Mammary epithelial cell (primary cell): ENCODE measurements at regions of chr3 and their contacts with region 1.

Region 1: GRCh38 chr3:132180337-132180791 is 136.8 kb upstream of the ACP3 start:
- DNase-seq: peak; percentile 63
- H3K4me3 ChIP-seq: no peak overlapping the region
- H3K27ac ChIP-seq: no peak overlapping the region
- H3K4me1 ChIP-seq: no peaks in the 10 kb centered on the region
- H3K27me3 ChIP-seq: no peaks in the 10 kb centered on the region
- CTCF ChIP-seq: peak; percentile 43 to 72

Region 2: GRCh38 chr3:131026321-131027178 is 1153.8 kb before region 1 on chr3 and contains the starts of genes ASTE1 and NEK11:
- CTCF ChIA-PET with region 1: no interaction called
- dilution Hi-C with region 1: no loop called
- in situ Hi-C with region 1: loop called in 1 of 2 experiments (anchors 25 kb)
- intact Hi-C with region 1: no loop called
- DNase-seq: peak; percentile 87
- H3K4me3 ChIP-seq: peak within 1 kb of the TSS; percentile 68 to 81 (median 78)
- H3K27ac ChIP-seq: peak within 1 kb of the TSS; percentile 97
- H3K4me1 ChIP-seq: peaks cover 4% of the 10 kb centered on the region
- H3K27me3 ChIP-seq: no peaks in the 10 kb centered on the region
- CTCF ChIP-seq: peak in 1 of 2 donors; percentile 4
- total RNA-seq, gene ASTE1: 4.4 to 6.3 TPM
- total RNA-seq, gene NEK11: 7.7 to 20.2 TPM

Region 3: GRCh38 chr3:131794766-131795388 is 385.5 kb before region 1 on chr3:
- CTCF ChIA-PET with region 1: no interaction called
- dilution Hi-C with region 1: no loop called
- in situ Hi-C with region 1: loop called (anchors 25 kb)
- intact Hi-C with region 1: loop called (anchors 1 kb)
- DNase-seq: peak; percentile 29
- H3K4me3 ChIP-seq: no peak overlapping the region
- H3K27ac ChIP-seq: no peak overlapping the region
- H3K4me1 ChIP-seq: no peaks in the 10 kb centered on the region
- H3K27me3 ChIP-seq: no peaks in the 10 kb centered on the region
- CTCF ChIP-seq: peak; percentile 89 to 95

Region 4: GRCh38 chr3:131849615-131850014 is 330.7 kb before region 1 on chr3:
- CTCF ChIA-PET with region 1: no interaction called
- dilution Hi-C with region 1: no loop called
- in situ Hi-C with region 1: no loop called
- intact Hi-C with region 1: no loop called
- DNase-seq: no peak
- H3K4me3 ChIP-seq: no peak overlapping the region
- H3K27ac ChIP-seq: no peak overlapping the region
- H3K4me1 ChIP-seq: no peaks in the 10 kb centered on the region
- H3K27me3 ChIP-seq: no peaks in the 10 kb centered on the region
- CTCF ChIP-seq: no peak

Region 5: DNA sequence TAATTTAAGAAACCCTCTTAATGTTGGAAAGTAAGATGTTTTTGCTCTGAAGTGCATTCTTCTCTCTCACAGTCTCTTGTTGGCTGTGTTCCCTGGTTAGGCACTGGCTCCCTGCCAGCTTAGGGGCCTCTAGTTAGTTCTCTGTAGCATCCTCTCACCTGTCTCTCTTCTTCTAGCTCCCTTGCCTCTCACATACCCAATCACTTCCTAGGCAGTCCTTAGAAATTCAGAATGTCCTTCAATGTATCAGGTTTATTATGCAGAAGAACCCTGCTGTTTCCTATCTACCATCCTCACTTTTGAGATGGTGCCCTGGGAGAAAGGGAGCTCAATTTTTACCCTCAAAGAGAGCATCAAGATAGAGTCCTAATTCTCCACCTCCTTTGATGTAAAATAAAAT is 109.3 kb before region 1 on chr3:
- CTCF ChIA-PET with region 1: no interaction called
- dilution Hi-C with region 1: loop called (anchors 25 kb)
- in situ Hi-C with region 1: no loop called
- intact Hi-C with region 1: no loop called
- DNase-seq: no peak
- H3K4me3 ChIP-seq: no peak overlapping the region
- H3K27ac ChIP-seq: no peak overlapping the region
- H3K4me1 ChIP-seq: no peaks in the 10 kb centered on the region
- H3K27me3 ChIP-seq: no peaks in the 10 kb centered on the region
- CTCF ChIP-seq: no peak

Region 6: GRCh38 chr3:132135628-132136333 is 44.6 kb before region 1 on chr3:
- CTCF ChIA-PET with region 1: interaction called, 3 read pairs
- dilution Hi-C with region 1: no loop called
- in situ Hi-C with region 1: no loop called
- intact Hi-C with region 1: loop called (anchors 5 kb)
- DNase-seq: peak; percentile 98
- H3K4me3 ChIP-seq: peak overlapping the region; percentile 26 to 42 (median 31)
- H3K27ac ChIP-seq: peak overlapping the region; percentile 100
- H3K4me1 ChIP-seq: peaks cover 29% of the 10 kb centered on the region
- H3K27me3 ChIP-seq: no peaks in the 10 kb centered on the region
- CTCF ChIP-seq: no peak

Region 7: DNA sequence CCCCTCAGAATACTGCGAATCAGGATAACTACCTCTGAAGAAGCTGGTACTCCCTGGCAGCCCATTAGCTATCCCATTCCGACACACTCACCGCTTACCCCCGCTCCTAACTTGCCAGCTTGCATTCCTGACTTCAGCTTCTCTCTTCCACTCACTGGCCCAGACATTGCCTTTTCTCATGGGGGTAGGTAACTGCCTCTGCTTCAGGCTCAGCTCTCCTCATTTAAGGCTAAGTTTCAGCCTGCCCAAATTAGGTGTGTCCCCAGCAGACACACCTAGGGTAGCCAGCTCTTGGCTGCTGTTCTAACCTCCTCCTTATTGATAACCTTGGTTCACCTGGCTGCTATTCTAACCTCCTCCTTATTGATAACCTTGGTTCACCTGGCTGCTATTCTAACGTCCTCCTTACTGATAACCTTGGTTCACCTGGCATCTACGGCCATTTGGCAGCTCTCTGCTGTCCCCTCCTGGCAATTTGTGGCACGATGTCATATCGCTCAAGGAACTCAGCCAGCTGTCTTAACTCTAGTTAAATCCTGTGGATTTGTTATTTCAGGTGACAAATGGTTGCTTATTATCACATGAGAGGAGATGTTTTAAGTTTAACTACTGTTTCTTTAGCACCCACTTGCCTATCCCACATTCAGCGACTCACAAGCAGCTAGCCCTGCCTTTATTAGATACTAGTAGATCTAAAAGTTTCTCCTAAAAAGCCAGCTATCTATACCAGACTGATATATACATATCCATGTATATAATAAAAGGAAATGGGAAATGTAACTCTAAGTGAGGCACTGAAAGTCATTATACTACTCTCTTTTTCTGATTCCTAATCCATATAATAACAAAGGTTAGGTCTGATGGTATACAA is 30.3 kb after region 1 on chr3:
- CTCF ChIA-PET with region 1: interaction called, 8 read pairs
- dilution Hi-C with region 1: no loop called
- in situ Hi-C with region 1: no loop called
- intact Hi-C with region 1: loop called (anchors 1 kb)
- DNase-seq: peak; percentile 41
- H3K4me3 ChIP-seq: no peak overlapping the region
- H3K27ac ChIP-seq: no peak overlapping the region
- H3K4me1 ChIP-seq: no peaks in the 10 kb centered on the region
- H3K27me3 ChIP-seq: no peaks in the 10 kb centered on the region
- CTCF ChIP-seq: peak; percentile 94 to 95

Region 8: GRCh38 chr3:132283440-132283839 is 103.1 kb after region 1 on chr3:
- CTCF ChIA-PET with region 1: no interaction called
- dilution Hi-C with region 1: no loop called
- in situ Hi-C with region 1: no loop called
- intact Hi-C with region 1: no loop called
- DNase-seq: no peak
- H3K4me3 ChIP-seq: no peak overlapping the region
- H3K27ac ChIP-seq: no peak overlapping the region
- H3K4me1 ChIP-seq: no peaks in the 10 kb centered on the region
- H3K27me3 ChIP-seq: no peaks in the 10 kb centered on the region
- CTCF ChIP-seq: no peak

Region 9: DNA sequence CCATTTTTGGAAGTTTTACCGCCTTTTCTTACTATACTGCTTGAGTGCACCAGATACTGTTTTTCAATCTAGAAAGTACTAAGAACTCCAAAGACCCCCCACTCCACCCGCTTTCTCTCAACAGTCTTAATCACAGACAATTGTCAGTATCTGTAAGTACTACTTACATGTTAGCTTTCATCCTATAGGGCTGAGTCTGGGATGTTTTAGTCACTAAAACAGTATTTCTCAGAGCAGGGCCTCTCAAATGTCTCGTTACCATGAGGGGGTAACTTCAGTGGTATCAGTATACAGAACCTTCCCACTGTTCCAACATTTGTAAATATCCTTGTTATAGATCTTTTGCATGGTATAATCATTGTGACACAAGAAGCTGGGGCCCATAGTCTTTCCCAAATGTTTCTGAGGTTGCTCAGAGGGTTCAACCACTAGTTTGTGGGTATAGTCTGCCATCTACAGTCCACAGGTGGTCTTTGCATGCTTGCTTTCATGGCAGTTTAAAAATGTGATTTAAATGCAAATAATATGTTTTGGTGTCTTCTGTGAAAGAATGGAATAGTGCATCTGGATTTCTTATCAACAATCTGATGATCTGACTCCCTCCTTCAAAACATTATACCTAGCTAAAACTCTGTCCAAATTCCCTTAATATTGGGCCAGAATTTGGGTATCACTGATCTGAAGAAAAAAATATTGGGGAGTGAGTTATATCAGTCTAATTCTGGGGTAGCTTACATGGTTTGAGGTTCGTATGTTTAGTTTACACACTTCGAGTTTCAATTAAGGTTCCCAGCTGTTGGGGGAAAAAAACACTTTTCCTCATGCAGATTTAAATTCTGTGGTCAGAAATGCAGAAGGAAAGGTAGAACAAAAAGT is 218.9 kb after region 1 on chr3:
- CTCF ChIA-PET with region 1: no interaction called
- dilution Hi-C with region 1: no loop called
- in situ Hi-C with region 1: no loop called
- intact Hi-C with region 1: loop called (anchors 1 kb)
- DNase-seq: peak; percentile 47
- H3K4me3 ChIP-seq: no peak overlapping the region
- H3K27ac ChIP-seq: no peak overlapping the region
- H3K4me1 ChIP-seq: no peaks in the 10 kb centered on the region
- H3K27me3 ChIP-seq: no peaks in the 10 kb centered on the region
- CTCF ChIP-seq: peak; percentile 85 to 86